Left cardiac atrium (tissue), 4 donors: ENCODE measurements at regions of chr15 and their contacts with region 1.

Region 1: GRCh38 chr15:96356494-96357455 is 26.3 kb downstream of the NR2F2 start:
- DNase-seq: peak; percentile 86
- ATAC-seq: peak; percentile 63 to 65

Region 2: GRCh38 chr15:96187341-96188305 is 169.2 kb before region 1 on chr15:
- intact Hi-C with region 1: no loop called
- DNase-seq: no peak
- ATAC-seq: no peak

Region 3: GRCh38 chr15:96428742-96429141 is 72.0 kb after region 1 on chr15:
- intact Hi-C with region 1: loop called in 1 of 2 experiments (anchors 10 kb)
- DNase-seq: no peak
- ATAC-seq: peak; percentile 97 to 99

Region 4: GRCh38 chr15:96585484-96586386 is 229.0 kb after region 1 on chr15:
- intact Hi-C with region 1: loop called (anchors 2 to 10 kb)
- DNase-seq: no peak
- ATAC-seq: no peak

Region 5: GRCh38 chr15:96893159-96893906 is 536.6 kb after region 1 on chr15:
- intact Hi-C with region 1: loop called in 1 of 2 experiments (anchors 5 kb)
- DNase-seq: no peak
- ATAC-seq: peak in 1 of 2 donors; percentile 38

Region 6: DNA sequence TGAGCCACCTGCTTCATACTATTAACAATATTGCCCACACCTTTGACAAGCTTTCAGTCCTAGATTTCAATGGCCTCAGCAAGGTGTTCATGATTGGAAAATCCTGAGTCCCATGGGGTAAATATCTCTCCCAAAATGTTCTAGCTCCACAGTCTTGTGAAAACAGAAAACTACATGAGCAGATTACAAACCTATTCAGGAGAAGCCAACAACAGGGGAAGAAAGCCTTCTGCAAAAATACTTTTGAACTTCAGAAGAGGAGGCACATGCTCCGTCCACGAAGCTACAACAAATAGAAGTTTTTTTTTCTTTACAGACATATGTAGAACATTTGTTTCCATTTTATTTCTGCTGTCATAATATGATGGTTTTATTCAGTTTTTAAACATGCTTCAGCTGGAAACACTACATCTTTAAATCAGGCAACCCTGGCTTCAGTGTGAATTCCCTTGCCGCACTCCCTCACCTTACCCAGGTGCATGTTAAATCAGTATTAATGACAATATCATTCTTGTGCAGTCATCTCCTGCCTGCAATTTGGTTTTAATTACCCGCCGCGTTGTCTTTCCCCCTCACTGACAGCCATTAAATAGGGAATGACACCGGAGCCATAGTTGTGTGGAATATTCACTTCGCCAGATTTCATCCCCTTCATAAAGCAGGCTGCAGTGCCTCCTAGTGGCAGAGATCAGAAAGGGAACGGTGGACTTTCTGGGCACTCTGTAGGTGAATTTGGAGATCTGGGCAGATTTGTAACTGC is 878.3 kb after region 1 on chr15:
- intact Hi-C with region 1: loop called in 1 of 2 experiments (anchors 10 kb)
- DNase-seq: peak; percentile 41
- ATAC-seq: peak in 1 of 2 donors; percentile 70